CD4-positive, alpha-beta T cell (primary cell): ENCODE measurements at regions of chr4 and their contacts with region 1.

Region 1: DNA sequence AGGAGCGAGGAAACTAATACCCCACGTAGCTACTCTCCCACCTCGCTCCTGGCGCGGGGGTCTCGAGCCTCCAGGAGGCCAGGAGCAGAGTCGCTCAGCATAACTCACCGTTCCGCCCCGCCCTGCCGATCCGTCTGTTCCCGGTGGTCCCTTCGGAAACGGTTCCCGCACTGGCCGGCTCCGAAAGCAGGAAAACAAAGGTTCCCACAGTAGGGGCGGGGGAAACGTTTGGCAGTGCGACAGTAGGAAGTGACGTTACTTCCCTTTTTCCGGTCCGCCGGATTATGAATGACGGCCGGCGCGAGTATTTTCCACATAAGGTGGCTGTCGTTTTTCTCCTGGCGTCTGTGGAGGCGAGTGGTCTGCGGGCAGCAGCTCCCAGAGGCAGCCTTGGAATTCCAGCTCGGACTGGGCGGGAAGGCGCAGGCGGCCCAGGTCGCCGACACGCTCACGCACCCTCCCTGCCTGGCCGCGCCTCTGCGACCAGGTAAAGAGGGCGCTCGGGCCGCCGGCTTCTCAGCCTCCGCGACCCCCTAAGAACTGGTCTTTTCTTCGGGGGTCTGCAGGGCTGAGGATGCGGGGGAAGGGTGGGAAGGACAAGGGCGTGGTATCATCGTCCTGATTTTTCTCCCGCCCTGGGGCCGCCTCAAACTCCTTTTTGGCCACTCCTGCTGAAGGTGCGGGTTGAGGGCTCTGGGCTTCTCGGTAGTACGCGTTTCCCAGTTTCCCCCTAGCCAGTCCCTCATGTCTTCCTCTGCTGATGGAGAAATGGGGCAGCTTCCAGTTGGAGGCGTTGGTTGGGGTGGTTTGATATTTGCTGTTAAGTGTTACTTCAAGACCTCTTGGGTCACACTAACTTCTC is at the starts of genes GSTCD and INTS12:
- DNase-seq: peak; percentile 77 to 93 (median 84)
- ATAC-seq: peak; percentile 90
- H3K4me3 ChIP-seq: peak within 1 kb of the TSS; percentile 68
- H3K4me3 Mint-ChIP-seq: peak within 1 kb of the TSS; percentile 100
- H3K27ac ChIP-seq: peak within 1 kb of the TSS; percentile 43 to 62
- H3K27ac Mint-ChIP-seq: peak within 1 kb of the TSS; percentile 94
- H3K4me1 ChIP-seq: peaks cover 9% of the 10 kb centered on the region
- H3K4me1 Mint-ChIP-seq: peaks cover 41% of the 10 kb centered on the region
- H3K27me3 ChIP-seq: no peaks in the 10 kb centered on the region
- H3K27me3 Mint-ChIP-seq: no peaks in the 10 kb centered on the region
- CTCF ChIP-seq: no peak
- total RNA-seq, gene GSTCD: 5.2 to 5.3 TPM
- total RNA-seq, gene INTS12: 17.8 to 19.9 TPM

Region 2: GRCh38 chr4:106315968-106316772 is 607.4 kb after region 1 on chr4 and contains the starts of genes AIMP1 and TBCK:
- CTCF ChIA-PET with region 1: no interaction called
- POLR2A ChIA-PET with region 1: interaction called, 4 read pairs
- intact Hi-C with region 1: loop called in 1 of 2 experiments (anchors 5 kb)
- DNase-seq: peak; percentile 78 to 96 (median 84)
- ATAC-seq: peak; percentile 84
- H3K4me3 ChIP-seq: peak within 1 kb of the TSS; percentile 81
- H3K4me3 Mint-ChIP-seq: no peak within 1 kb of the TSS
- H3K27ac ChIP-seq: peak within 1 kb of the TSS; percentile 95 to 96
- H3K27ac Mint-ChIP-seq: no peak within 1 kb of the TSS
- H3K4me1 ChIP-seq: peaks cover 18% of the 10 kb centered on the region
- H3K4me1 Mint-ChIP-seq: peaks cover 26% of the 10 kb centered on the region
- H3K27me3 ChIP-seq: no peaks in the 10 kb centered on the region
- H3K27me3 Mint-ChIP-seq: no peaks in the 10 kb centered on the region
- CTCF ChIP-seq: no peak
- total RNA-seq, gene AIMP1: 75.4 to 77.8 TPM
- total RNA-seq, gene TBCK: 23.5 to 29.0 TPM